Activated naive CD4-positive, alpha-beta T cell treated with anti-CD3 and anti-CD28 coated beads for 36 hours (primary cell): ENCODE measurements at regions of chr3 and their contacts with region 1.

Region 1: GRCh38 chr3:115147329-115148141 is 447 bp upstream of the ZBTB20 start:
- DNase-seq: peak; percentile 98
- H3K4me3 Mint-ChIP-seq: peak overlapping the region; percentile 82
- H3K27ac Mint-ChIP-seq: peak overlapping the region; percentile 96
- H3K4me1 Mint-ChIP-seq: peaks cover 20% of the 10 kb centered on the region
- H3K27me3 Mint-ChIP-seq: no peaks in the 10 kb centered on the region

Region 2: GRCh38 chr3:113696658-113697499 is 1450.7 kb before region 1 on chr3:
- CTCF ChIA-PET with region 1: no interaction called
- intact Hi-C with region 1: loop called (anchors 1 kb)
- DNase-seq: peak; percentile 99
- H3K4me3 Mint-ChIP-seq: no peak overlapping the region
- H3K27ac Mint-ChIP-seq: no peak overlapping the region
- H3K4me1 Mint-ChIP-seq: peaks cover 25% of the 10 kb centered on the region
- H3K27me3 Mint-ChIP-seq: no peaks in the 10 kb centered on the region

Region 3: DNA sequence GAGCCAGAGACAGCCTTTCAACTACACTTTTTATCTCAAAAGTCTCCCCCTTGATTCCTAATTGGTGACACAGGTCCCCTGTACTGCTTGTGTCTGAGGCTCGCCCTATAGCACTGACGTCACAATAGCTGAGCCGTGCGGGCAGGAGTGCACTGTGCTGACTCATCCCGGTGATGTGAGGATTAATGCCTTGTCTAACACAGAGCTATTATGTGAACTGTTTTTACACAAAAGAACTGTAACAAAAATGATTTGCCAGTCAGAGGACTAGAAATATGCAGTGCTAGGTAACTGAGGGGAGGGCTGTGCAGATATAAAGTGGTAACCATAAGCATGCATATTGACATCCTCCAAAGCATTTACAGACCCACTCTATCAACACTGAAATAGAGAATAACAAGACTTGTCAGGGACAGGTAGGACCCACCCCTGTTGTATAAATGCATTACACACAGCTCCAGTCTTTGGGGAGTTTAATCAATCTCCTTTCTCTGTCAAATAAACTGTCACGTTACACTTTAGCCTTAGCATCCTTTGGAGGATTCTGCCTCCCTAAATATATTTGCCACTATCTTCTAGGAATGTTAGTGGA is 648.7 kb before region 1 on chr3:
- CTCF ChIA-PET with region 1: no interaction called
- intact Hi-C with region 1: loop called (anchors 5 kb)
- DNase-seq: no peak
- H3K4me3 Mint-ChIP-seq: no peak overlapping the region
- H3K27ac Mint-ChIP-seq: no peak overlapping the region
- H3K4me1 Mint-ChIP-seq: peaks cover 36% of the 10 kb centered on the region
- H3K27me3 Mint-ChIP-seq: peaks cover 6% of the 10 kb centered on the region

Region 4: GRCh38 chr3:114879059-114880031 is 268.2 kb before region 1 on chr3:
- CTCF ChIA-PET with region 1: no interaction called
- intact Hi-C with region 1: no loop called
- DNase-seq: no peak
- H3K4me3 Mint-ChIP-seq: no peak overlapping the region
- H3K27ac Mint-ChIP-seq: no peak overlapping the region
- H3K4me1 Mint-ChIP-seq: peaks cover 12% of the 10 kb centered on the region
- H3K27me3 Mint-ChIP-seq: no peaks in the 10 kb centered on the region

Region 5: DNA sequence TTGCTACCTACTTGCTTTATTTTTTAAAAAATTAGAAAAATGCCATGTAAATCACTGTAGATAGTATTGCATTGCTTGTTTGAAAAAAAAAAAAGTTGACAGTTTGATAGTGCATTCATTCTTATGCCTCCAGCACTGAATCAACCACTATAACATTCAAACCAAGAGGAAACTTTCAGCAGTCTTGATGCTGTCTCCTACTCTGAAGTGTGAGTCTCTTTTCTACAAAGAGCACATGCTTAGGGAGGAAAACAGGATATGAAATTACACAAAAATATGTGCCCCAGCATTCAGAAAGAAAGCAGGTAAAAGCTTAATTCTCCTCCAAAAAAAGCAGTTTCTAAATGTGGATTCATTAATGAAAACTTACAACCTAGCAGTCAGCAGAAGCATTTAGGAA is 78.7 kb before region 1 on chr3:
- CTCF ChIA-PET with region 1: no interaction called
- intact Hi-C with region 1: loop called (anchors 2 kb)
- DNase-seq: no peak
- H3K4me3 Mint-ChIP-seq: peak overlapping the region; percentile 51
- H3K27ac Mint-ChIP-seq: peak overlapping the region; percentile 33
- H3K4me1 Mint-ChIP-seq: peaks cover 39% of the 10 kb centered on the region
- H3K27me3 Mint-ChIP-seq: no peaks in the 10 kb centered on the region

Region 6: GRCh38 chr3:115169808-115170207 is 22.3 kb after region 1 on chr3:
- CTCF ChIA-PET with region 1: interaction called, 6 read pairs
- intact Hi-C with region 1: loop called (anchors 1 kb)
- DNase-seq: no peak
- H3K4me3 Mint-ChIP-seq: no peak overlapping the region
- H3K27ac Mint-ChIP-seq: no peak overlapping the region
- H3K4me1 Mint-ChIP-seq: peaks cover 12% of the 10 kb centered on the region
- H3K27me3 Mint-ChIP-seq: no peaks in the 10 kb centered on the region

Region 7: GRCh38 chr3:115783938-115784738 is 636.6 kb after region 1 on chr3:
- CTCF ChIA-PET with region 1: interaction called, 3 read pairs
- intact Hi-C with region 1: loop called (anchors 1 kb)
- DNase-seq: peak; percentile 92
- H3K4me3 Mint-ChIP-seq: peak overlapping the region; percentile 90
- H3K27ac Mint-ChIP-seq: peak overlapping the region; percentile 96
- H3K4me1 Mint-ChIP-seq: peaks cover 18% of the 10 kb centered on the region
- H3K27me3 Mint-ChIP-seq: no peaks in the 10 kb centered on the region